Calu3 (cell line): ENCODE measurements at regions of chr18 and their contacts with region 1.

Region 1: GRCh38 chr18:35240664-35241447 is at the start of gene ZNF397:
- DNase-seq: peak; percentile 97
- H3K4me3 Mint-ChIP-seq: peak within 1 kb of the TSS; percentile 96
- H3K27ac Mint-ChIP-seq: peak within 1 kb of the TSS; percentile 93
- H3K4me1 Mint-ChIP-seq: no peaks in the 10 kb centered on the region
- H3K27me3 Mint-ChIP-seq: no peaks in the 10 kb centered on the region
- CTCF ChIP-seq: no peak
- total RNA-seq, gene ZNF397: 27.9 and 29.2 TPM in 2 replicates

Region 2: GRCh38 chr18:35290073-35290735 is 49.3 kb after region 1 on chr18 and contains the start of gene ZSCAN30:
- CTCF ChIA-PET with region 1: no interaction called
- intact Hi-C with region 1: loop called (anchors 5 kb)
- DNase-seq: peak; percentile 96
- H3K4me3 Mint-ChIP-seq: peak within 1 kb of the TSS; percentile 99
- H3K27ac Mint-ChIP-seq: peak within 1 kb of the TSS; percentile 99
- H3K4me1 Mint-ChIP-seq: peaks cover 19% of the 10 kb centered on the region
- H3K27me3 Mint-ChIP-seq: no peaks in the 10 kb centered on the region
- CTCF ChIP-seq: no peak
- total RNA-seq, gene ZSCAN30: 15.9 and 17.0 TPM in 2 replicates

Region 3: DNA sequence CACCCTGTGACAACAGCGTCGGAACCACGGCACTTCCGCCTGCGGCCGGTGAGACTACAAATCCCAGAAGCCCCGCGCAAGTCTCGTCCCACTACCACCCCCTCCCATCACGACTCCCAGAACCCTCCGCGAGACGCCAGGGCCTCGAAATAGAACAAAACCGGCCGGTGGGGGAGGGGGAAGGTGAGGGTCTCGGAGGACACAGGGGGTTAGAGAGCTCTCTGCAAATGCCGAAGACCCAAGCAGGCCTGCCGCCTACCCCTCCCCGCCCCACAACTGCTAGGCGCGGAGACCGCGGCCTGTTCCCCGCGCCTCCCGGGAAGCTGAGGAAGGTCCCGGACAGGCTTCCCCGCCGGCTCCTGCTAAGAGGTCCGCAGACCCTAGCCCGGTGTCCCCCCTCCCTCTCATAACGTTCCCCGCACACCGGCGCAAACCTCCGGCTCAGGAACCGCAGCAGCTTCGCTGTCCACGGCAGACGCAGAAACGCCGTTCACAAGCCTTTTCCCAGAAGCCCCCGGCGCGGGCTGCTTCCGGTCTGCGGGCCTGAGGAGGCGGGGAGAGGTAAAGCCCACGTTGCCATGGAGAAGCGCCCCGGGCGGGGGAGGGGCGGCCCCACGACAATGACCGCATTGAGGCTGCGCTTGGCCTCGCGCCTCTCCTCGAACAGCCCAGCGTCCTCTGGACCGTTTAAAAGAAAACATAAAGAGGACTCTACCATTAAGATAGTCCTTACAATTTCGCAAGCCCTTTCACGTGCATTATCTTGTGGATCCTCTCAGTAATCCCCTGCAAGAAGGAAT is 103.3 kb after region 1 on chr18 and contains the start of gene ZNF24:
- CTCF ChIA-PET with region 1: no interaction called
- intact Hi-C with region 1: loop called (anchors 2 kb)
- DNase-seq: peak; percentile 97
- H3K4me3 Mint-ChIP-seq: peak within 1 kb of the TSS; percentile 90
- H3K27ac Mint-ChIP-seq: peak within 1 kb of the TSS; percentile 84
- H3K4me1 Mint-ChIP-seq: peaks cover 18% of the 10 kb centered on the region
- H3K27me3 Mint-ChIP-seq: no peaks in the 10 kb centered on the region
- CTCF ChIP-seq: no peak
- total RNA-seq, gene ZNF24: 56.3 and 60.0 TPM in 2 replicates